OCI-LY7 (cell line): ENCODE measurements at regions of chr18 and their contacts with region 1.

Region 1: DNA sequence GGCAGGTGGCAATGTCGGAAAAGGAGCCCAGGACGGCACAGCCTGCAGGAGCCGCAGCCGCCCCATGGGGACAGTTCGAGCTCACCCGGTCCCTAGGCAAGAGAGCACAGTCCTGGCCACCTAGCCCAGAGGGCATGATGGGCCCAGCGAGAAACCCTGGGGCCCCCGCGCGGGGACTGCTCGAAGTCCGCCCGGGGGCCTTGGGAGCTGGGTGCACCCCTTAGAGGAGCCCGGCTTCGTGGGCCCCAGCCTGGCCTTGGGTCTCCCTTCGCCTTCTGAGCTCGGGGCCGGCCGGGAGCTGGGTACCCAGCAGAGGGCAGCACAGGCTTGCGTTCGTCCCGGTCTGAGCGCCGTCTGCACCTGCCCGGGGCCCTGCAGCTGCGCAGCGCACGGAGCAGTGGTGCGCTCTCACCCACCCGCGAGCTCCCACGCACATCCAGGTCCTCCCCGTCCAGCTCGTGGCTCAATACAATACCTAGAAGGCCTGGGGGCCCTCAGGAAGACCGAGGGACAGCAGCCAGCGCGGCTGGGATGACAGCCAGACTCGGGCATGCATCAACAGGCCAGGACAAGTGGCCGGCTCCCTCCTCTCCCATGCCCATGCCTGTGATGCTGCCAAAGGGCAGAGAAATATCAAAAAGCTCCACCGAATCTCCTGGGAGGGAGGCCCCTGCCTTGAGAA is 96.2 kb upstream of the ZNF532 start:
- DNase-seq: peak; percentile 8
- H3K4me3 ChIP-seq: no peak overlapping the region
- H3K27ac ChIP-seq: no peak overlapping the region
- H3K4me1 ChIP-seq: peaks cover 4% of the 10 kb centered on the region
- CTCF ChIP-seq: peak; percentile 65

Region 2: GRCh38 chr18:58043491-58044379 is 724.7 kb before region 1 on chr18 and contains the start of gene NEDD4L:
- CTCF ChIA-PET with region 1: no interaction called
- POLR2A ChIA-PET with region 1: no interaction called
- intact Hi-C with region 1: loop called (anchors 10 kb)
- DNase-seq: peak; percentile 71
- H3K4me3 ChIP-seq: peak within 1 kb of the TSS; percentile 78
- H3K27ac ChIP-seq: peak within 1 kb of the TSS; percentile 16
- H3K4me1 ChIP-seq: peaks cover 6% of the 10 kb centered on the region
- CTCF ChIP-seq: peak; percentile 76
- total RNA-seq, gene NEDD4L: 3.3 and 3.4 TPM in 2 replicates

Region 3: DNA sequence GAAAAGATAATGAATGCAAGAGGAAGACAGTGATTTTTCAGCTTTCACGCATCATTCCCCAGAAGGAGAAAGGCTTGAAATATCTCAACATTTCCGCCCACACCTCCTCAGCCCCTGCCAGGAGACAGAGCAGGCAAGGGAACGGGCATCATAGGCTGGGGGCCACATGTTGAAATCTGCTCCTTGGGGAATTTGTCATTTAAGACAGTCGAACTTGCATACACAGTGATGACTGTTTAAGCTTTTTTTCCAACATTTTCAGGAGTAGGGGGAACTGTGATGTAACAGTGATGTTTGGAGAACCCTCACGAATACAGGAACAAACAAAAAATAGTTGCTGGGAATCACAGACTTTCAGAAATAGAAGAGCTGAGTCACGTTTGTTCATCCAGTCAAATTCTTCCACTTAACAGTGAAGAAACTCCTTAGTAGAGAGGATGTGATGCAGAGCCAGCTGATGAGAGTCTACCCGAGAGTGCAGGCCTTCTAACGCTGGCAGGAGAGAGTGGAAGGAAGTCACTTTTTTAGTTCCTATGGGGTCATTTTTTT is 406.3 kb before region 1 on chr18:
- CTCF ChIA-PET with region 1: no interaction called
- POLR2A ChIA-PET with region 1: no interaction called
- intact Hi-C with region 1: no loop called
- DNase-seq: no peak
- H3K4me3 ChIP-seq: no peak overlapping the region
- H3K27ac ChIP-seq: no peak overlapping the region
- H3K4me1 ChIP-seq: no peaks in the 10 kb centered on the region
- CTCF ChIP-seq: no peak

Region 4: GRCh38 chr18:58529714-58530354 is 238.6 kb before region 1 on chr18:
- CTCF ChIA-PET with region 1: interaction called, 4 read pairs
- POLR2A ChIA-PET with region 1: interaction called, 4 read pairs
- intact Hi-C with region 1: loop called (anchors 1 kb)
- DNase-seq: peak; percentile 61
- H3K4me3 ChIP-seq: no peak overlapping the region
- H3K27ac ChIP-seq: no peak overlapping the region
- H3K4me1 ChIP-seq: peaks cover 27% of the 10 kb centered on the region
- CTCF ChIP-seq: peak; percentile 82

Region 5: DNA sequence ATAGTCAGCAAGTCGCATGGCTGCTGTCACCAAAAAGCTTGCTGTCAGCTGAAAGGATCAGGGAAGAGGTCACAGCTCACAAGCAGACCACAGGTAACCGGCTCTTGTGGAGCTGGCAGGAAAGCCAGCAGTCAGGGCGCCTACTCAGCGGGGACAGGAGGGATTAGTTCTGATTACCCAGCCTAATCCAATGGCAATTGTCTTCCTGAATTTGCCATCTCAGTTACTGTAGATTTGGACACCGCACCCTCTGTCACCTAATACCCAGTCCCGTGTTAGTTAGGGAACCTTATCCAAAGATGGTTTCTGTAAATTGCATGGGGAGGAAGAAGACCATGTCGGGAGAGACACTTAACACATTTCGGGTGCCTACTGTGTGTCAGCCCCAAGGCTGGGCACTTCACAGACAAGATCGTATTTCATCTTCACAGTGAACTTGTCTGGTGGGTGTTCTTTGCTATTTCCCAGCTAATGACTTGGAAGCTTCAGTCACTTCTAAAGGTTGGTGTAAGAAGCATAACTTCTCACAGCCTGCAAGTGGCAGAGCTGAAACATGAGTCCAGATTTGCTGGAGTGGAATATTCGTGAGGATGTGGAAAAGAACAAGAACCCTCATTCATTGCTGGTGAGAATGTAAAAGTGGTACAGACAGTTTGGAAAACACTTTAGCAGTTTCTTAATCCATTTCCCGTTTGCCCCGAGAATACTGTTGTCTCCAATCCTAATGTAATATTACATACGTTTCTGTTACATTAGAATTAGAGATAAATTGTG is 149.4 kb before region 1 on chr18:
- CTCF ChIA-PET with region 1: no interaction called
- POLR2A ChIA-PET with region 1: no interaction called
- intact Hi-C with region 1: no loop called
- DNase-seq: no peak
- H3K4me3 ChIP-seq: no peak overlapping the region
- H3K27ac ChIP-seq: no peak overlapping the region
- H3K4me1 ChIP-seq: no peaks in the 10 kb centered on the region
- CTCF ChIP-seq: no peak

Region 6: GRCh38 chr18:58671111-58671631 is 97.3 kb before region 1 on chr18 and contains the start of gene MALT1:
- CTCF ChIA-PET with region 1: no interaction called
- POLR2A ChIA-PET with region 1: no interaction called
- intact Hi-C with region 1: loop called (anchors 1 kb)
- DNase-seq: peak; percentile 90
- H3K4me3 ChIP-seq: peak within 1 kb of the TSS; percentile 78
- H3K27ac ChIP-seq: peak within 1 kb of the TSS; percentile 74
- H3K4me1 ChIP-seq: peaks cover 17% of the 10 kb centered on the region
- CTCF ChIP-seq: no peak
- total RNA-seq, gene MALT1: 14.4 and 15.5 TPM in 2 replicates

Region 7: DNA sequence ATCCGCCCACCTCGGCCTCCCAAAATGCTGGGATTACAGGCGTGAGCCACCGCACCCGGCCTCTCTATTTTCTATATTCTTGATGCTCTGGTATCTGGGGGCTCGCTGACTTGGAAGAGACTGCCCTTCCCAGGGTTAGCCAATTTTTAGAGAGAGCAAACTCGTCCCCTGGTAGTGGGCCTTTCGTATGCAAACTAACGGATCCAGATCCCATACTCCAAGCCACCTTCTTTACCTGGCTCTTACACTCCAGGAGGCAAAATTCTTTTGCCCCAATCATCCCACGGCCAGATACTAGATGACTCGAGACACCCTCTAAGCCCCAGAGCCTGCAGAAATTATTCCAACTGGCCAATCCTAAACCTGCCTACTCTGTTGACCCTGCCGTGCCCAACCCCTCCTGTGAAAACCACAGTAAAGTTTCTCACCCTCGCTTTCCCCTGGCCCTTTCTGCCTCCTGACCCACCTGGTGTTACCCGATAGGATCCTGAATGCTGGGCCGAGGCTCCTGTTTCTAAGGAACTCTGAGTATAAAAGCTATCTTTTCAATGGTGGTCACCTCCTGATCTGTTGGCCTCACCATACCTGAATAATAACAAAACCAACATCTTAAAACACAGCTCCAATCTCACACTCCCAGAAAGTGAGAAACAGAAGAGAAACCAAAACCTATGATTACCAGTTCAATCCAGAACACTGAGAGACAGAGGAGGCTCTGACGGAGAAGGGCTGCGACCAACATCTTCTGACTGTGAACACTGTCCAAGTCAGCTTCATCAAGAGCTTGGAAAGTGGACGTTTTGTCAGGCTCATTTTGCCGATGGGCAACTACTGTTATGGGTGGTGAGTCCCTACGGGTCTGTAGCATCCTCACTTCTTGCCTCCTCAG is 38.6 kb after region 1 on chr18:
- CTCF ChIA-PET with region 1: no interaction called
- POLR2A ChIA-PET with region 1: no interaction called
- intact Hi-C with region 1: no loop called
- DNase-seq: no peak
- H3K4me3 ChIP-seq: no peak overlapping the region
- H3K27ac ChIP-seq: no peak overlapping the region
- H3K4me1 ChIP-seq: no peaks in the 10 kb centered on the region
- CTCF ChIP-seq: no peak

Region 8: DNA sequence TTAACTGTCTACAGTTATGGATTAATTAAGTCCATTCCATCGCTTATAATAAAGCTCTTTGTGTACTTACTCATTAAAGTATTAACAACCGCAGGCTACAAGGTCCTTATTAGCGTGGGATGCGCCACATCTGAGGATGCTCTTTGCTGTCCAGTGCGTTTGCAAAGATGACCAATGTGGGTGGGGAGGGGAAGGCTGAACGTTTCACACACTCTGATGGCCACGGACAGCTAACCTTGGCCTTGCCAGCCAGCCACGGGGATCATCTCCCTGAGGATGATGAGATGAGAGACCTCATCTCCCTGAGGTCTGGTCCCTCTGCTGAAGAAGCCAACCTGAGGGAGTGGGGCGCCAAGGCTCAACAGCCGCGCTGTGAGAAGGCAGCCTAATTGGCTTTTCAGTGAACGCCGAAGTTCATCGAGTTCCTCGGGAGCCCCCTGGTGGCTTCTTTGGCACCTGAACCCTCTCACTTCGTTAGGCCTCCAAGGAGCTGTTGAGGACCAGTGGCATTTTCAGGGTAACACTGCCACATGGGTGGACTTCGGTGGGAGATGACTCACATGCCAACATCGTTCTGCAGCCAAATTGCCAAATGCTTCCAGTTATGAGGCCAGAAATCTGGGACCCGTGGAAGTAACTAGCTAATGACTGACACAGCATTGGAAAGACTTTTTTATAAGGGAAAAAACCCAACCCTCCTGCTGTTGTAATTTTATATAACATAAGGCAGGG is 301.9 kb after region 1 on chr18:
- CTCF ChIA-PET with region 1: interaction called, 5 read pairs
- POLR2A ChIA-PET with region 1: no interaction called
- intact Hi-C with region 1: loop called (anchors 1 kb)
- DNase-seq: peak; percentile 64
- H3K4me3 ChIP-seq: no peak overlapping the region
- H3K27ac ChIP-seq: no peak overlapping the region
- H3K4me1 ChIP-seq: no peaks in the 10 kb centered on the region
- CTCF ChIP-seq: peak; percentile 79